ENCODE measurements at regions of chr6 and their contacts with region 1.

Region 1: DNA sequence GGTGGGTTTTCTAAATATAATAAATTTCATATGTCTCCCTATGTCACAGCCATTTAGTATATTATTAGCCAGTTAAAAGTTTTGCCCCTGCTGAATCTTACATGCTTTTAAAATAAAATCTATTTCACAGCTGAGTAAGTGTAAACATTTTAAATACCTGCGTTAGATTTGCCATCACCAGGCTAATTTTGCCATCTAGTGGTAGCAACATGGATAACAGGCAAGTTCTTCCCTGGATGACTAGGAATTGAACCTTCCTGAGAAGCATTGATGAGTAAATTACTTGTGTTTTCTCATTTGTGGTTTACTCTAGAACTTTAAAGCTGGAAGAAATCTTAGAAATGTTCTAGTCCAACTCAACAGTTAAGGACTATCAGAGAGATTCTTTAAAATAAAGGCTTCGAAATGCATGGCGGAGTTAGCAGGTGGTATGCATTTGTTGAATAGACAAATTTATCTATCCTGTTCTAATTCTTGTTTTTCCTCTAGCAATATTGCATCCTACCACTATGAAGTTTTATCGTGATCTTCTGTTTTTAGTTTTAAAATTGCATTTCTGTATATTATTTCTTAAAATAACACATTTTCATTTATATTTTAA is 2.6 kb downstream of the PRSS35 start:
- DNase-seq: peak; percentile 26 to 62 (median 50)
- H3K4me3 ChIP-seq: no peak overlapping the region
- H3K4me3 Mint-ChIP-seq: no peak overlapping the region
- H3K27ac ChIP-seq: no peak overlapping the region
- H3K27ac Mint-ChIP-seq: no peak overlapping the region
- H3K4me1 ChIP-seq: peaks cover 5 to 7% of the 10 kb centered on the region in 2 donors
- H3K4me1 Mint-ChIP-seq: peaks cover 10% of the 10 kb centered on the region
- H3K27me3 ChIP-seq: peaks cover 34 to 43% of the 10 kb centered on the region in 2 donors
- H3K27me3 Mint-ChIP-seq: peaks cover 38 to 45% (median 42%) of the 10 kb centered on the region in 3 donors
- CTCF ChIP-seq: peak; percentile 87

Region 2: DNA sequence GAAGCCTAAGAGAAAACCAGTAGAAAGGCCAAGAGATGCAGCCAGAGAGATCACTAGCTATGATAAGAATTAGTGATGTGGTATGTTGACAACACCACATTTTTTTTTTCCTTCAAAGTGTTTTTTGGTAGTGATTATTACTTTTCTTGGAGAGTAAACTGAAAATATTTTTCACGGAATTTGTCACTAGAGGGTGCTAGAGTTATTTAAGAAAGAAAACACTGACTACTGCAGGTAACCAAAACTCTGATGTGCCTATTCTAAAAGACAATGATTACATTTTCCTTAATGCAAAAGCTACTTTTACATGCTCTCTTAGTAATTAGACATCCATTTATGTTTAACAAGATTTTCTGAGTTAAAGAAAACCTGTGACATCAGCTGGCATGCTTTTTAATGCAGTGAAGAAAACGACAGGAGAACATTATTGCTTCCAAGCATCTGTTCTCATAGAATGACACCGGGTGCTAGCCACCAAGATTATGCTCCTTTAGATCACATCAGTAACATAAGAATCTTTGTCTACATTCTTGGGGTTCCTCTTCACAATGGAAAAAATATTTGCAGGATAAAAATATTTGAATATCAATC is 293.0 kb before region 1 on chr6:
- intact Hi-C with region 1: loop called (anchors 10 kb)
- DNase-seq: peak; percentile 2 to 33 (median 9)
- H3K4me3 ChIP-seq: no peak overlapping the region
- H3K4me3 Mint-ChIP-seq: no peak overlapping the region
- H3K27ac ChIP-seq: no peak overlapping the region
- H3K27ac Mint-ChIP-seq: no peak overlapping the region
- H3K4me1 ChIP-seq: no peaks in the 10 kb centered on the region
- H3K4me1 Mint-ChIP-seq: no peaks in the 10 kb centered on the region
- H3K27me3 ChIP-seq: no peaks in the 10 kb centered on the region
- H3K27me3 Mint-ChIP-seq: peaks cover 1 to 2% (median 1%) of the 10 kb centered on the region in 3 donors
- CTCF ChIP-seq: peak; percentile 55

Region 3: GRCh38 chr6:83417880-83418663 is 96.9 kb before region 1 on chr6:
- intact Hi-C with region 1: loop called (anchors 2 kb)
- DNase-seq: peak; percentile 34 to 57 (median 52)
- H3K4me3 ChIP-seq: no peak overlapping the region
- H3K4me3 Mint-ChIP-seq: no peak overlapping the region
- H3K27ac ChIP-seq: no peak overlapping the region
- H3K27ac Mint-ChIP-seq: no peak overlapping the region
- H3K4me1 ChIP-seq: no peaks in the 10 kb centered on the region
- H3K4me1 Mint-ChIP-seq: no peaks in the 10 kb centered on the region
- H3K27me3 ChIP-seq: peaks cover 0 to 2% of the 10 kb centered on the region in 2 donors
- H3K27me3 Mint-ChIP-seq: peaks cover 9 to 11% (median 9%) of the 10 kb centered on the region in 3 donors
- CTCF ChIP-seq: peak; percentile 73

Region 4: GRCh38 chr6:84601366-84601765 is 1086.4 kb after region 1 on chr6:
- intact Hi-C with region 1: no loop called
- DNase-seq: no peak
- H3K4me3 ChIP-seq: no peak overlapping the region
- H3K4me3 Mint-ChIP-seq: no peak overlapping the region
- H3K27ac ChIP-seq: no peak overlapping the region
- H3K27ac Mint-ChIP-seq: no peak overlapping the region
- H3K4me1 ChIP-seq: no peaks in the 10 kb centered on the region
- H3K4me1 Mint-ChIP-seq: no peaks in the 10 kb centered on the region
- H3K27me3 ChIP-seq: no peaks in the 10 kb centered on the region
- H3K27me3 Mint-ChIP-seq: peaks cover 0 to 1% (median 0%) of the 10 kb centered on the region in 3 donors
- CTCF ChIP-seq: no peak

Measured in CD14-positive monocyte (primary cell).